ENCODE measurements at regions of chr15 and their contacts with region 1.

Region 1: DNA sequence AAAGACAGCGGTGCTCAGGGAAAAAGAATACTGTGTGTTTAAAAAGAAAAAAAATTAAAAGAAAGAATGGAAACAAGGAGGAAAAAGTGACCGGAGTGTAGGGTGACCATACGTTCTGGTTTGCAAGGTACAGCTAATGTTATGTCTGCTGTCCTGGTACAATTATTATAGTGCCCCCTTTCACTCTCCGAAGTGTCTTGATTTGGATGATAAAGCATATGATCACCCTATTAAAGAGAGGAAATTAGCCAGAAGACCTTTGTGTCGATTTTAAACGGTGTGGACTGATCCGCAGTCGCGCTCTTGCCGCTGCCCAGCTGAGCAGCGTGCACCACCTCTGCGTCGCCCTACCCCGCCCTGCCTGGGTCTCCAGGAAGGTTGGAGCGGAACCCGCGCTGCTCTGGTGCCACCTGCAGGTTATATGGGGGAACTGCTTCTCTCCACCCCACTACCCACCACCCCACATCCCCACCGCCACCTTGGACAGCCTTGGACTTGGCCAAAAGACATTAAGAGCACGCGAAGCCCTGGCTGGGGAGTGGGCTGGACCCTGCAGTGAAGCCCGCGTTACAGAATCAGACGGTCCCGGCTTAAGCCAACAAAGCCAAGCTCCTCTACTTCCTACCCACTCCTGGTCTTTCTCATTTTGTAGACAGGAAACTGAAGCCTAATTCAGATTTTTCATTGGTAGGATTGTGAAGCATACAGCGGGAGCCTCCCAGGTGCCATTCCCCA is 41.2 kb upstream of the UBE2Q2 start:
- DNase-seq: peak; percentile 80 to 81 (median 81)
- ATAC-seq: peak; percentile 100
- H3K4me3 ChIP-seq: no peak overlapping the region
- H3K4me1 ChIP-seq: no peaks in the 10 kb centered on the region
- CTCF ChIP-seq: peak; percentile 84

Region 2: DNA sequence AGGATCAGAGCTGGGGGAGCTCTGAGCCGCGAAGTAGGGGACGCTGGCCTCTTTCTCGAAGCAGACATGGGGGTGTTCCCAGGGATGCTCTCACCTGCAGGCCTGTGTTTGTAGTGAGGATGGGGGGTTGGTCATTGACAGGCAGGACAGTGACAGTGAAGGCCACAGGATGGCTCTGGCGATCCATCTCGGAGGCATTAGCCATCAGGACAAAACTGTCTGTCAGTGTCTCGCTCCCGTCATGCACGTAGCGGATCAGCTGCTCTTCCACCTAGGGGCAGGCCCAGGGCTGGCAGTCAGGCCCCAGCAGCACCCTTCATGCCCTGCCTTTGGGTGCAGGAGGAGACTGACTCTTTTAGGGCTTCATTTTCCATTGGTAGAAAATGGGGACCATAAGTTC is 117.4 kb before region 1 on chr15:
- intact Hi-C with region 1: loop called in 1 of 2 experiments (anchors 5 kb)
- DNase-seq: no peak
- ATAC-seq: no peak
- H3K4me3 ChIP-seq: no peak overlapping the region
- H3K4me1 ChIP-seq: peaks cover 8% of the 10 kb centered on the region
- CTCF ChIP-seq: no peak

Region 3: DNA sequence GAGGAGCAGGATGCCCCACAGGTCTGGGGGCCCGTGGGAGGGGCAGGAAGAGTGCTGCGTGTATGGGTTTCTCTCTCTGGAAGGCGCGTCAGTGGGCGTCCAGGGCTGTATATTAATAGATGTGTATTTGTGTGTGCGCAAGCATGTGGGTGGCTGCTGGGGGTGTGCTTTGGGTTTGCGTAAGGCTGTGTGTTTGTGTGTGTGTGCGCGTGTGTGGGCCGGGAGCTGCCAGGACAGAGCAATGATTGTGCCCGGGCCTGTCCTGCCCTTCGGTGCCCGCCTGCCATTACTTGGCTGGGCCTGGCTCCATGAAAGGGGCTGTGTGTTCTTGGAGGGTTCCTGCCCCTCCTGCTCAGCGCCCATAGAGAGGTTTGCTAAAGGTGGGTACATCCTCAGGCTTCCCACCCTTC is 105.7 kb before region 1 on chr15:
- intact Hi-C with region 1: no loop called
- DNase-seq: no peak
- ATAC-seq: no peak
- H3K4me3 ChIP-seq: no peak overlapping the region
- H3K4me1 ChIP-seq: peaks cover 8% of the 10 kb centered on the region
- CTCF ChIP-seq: no peak

Region 4: DNA sequence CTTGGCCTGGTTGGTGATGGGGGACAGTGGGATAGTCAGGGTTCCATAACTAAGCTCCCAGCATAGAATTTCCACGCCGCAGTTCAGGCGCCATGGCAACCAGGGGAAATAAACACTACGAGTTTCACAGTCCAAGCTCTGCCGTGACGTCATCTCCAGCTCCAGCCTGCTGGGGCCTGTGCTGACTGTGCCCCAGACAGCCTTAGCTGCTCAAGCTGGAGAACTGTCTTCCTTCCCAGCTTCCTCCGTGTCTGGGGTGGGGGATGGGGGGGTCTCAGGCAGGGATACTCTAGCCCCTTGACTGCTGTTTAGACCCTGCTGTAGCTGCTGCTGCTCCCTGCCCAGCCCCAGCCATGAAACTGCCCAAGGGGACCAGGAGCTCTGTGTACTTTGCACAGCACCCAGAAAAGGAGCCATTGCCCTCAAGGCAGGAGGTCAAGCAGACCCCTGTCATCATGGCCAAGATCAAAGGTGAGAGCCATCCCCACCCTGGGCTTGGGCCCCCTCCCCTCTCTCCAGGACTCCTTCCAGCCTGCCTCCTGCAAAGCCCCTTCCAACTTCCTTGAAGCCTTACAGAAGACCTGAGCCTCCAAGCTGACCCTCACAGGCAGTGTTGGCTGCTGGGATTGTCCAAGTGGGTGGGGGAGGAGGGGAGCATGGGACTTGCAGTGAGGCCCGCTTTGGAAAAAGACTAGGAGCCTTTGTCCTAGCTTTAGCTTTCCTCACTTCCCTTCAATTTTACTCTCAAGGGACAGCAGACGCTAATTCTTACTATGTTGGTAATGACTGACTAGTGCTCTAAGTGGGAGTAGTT is 78.0 kb before region 1 on chr15:
- intact Hi-C with region 1: loop called (anchors 10 kb)
- DNase-seq: peak; percentile 86 to 93 (median 88)
- ATAC-seq: peak; percentile 88
- H3K4me3 ChIP-seq: no peak overlapping the region
- H3K4me1 ChIP-seq: peaks cover 17% of the 10 kb centered on the region
- CTCF ChIP-seq: no peak